ENCODE measurements at regions of chr2 and their contacts with region 1.

Region 1: GRCh38 chr2:1653956-1654695 is 90.2 kb downstream of the PXDN start:
- DNase-seq: peak in 1 of 2 donors; percentile 79
- H3K4me3 ChIP-seq: peak overlapping the region; percentile 1 to 15
- H3K27ac ChIP-seq: peak overlapping the region; percentile 94 to 97
- H3K4me1 ChIP-seq: peaks cover 22 to 56% of the 10 kb centered on the region in 2 donors
- H3K27me3 ChIP-seq: no peaks in the 10 kb centered on the region
- CTCF ChIP-seq: no peak

Region 2: GRCh38 chr2:1563943-1564891 is 89.9 kb before region 1 on chr2:
- intact Hi-C with region 1: no loop called
- DNase-seq: no peak
- H3K4me3 ChIP-seq: no peak overlapping the region
- H3K27ac ChIP-seq: no peak overlapping the region
- H3K4me1 ChIP-seq: no peaks in the 10 kb centered on the region
- H3K27me3 ChIP-seq: no peaks in the 10 kb centered on the region
- CTCF ChIP-seq: no peak

Region 3: DNA sequence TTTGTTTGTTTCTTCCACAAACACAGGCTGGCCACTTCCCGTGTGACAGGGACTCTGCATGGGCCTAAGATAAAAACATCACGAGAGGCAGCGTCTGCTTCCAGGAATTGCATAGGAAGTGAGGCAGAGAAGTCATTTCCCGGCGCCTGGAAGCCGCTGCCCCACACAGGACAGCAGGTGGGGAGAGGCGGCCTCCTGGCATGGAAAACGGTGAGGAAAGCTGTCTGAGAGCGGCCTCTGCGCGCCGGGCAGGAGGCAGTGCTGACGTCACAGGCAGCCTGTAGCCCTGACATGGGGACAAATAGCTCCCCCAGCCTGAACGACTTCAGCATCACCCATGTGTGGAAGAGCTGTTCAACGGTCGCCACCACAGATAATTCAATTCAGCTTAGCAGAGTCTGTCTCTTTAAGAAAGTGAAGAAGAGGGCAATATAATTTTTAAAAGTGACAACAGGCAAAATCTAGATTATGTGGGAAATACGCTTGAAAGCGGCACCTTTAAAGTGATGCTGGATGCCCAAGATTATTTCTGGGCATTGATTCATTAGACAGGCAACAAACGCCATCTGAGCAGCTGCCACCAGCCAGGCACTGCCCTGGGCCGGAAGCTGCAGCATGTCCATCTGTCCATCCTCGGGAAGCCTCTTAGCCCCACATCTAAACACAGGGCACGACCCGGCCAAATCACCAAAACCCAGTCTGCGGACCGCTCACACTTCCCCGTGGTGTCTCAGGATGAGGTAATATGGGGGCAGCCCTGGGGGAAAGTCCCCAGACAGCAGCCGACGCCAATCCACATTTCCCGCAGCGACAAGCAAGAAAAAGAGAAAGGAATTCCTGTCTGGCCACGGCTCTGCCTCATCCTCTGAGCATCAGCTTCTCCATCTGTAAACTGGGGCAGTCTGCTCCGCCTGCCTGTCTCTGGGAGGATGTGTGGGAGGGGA is 48.8 kb before region 1 on chr2:
- intact Hi-C with region 1: no loop called
- DNase-seq: no peak
- H3K4me3 ChIP-seq: no peak overlapping the region
- H3K27ac ChIP-seq: no peak overlapping the region
- H3K4me1 ChIP-seq: no peaks in the 10 kb centered on the region
- H3K27me3 ChIP-seq: no peaks in the 10 kb centered on the region
- CTCF ChIP-seq: no peak

Region 4: GRCh38 chr2:1641523-1641922 is 12.6 kb before region 1 on chr2:
- intact Hi-C with region 1: loop called (anchors 1 kb)
- DNase-seq: no peak
- H3K4me3 ChIP-seq: no peak overlapping the region
- H3K27ac ChIP-seq: peak overlapping the region; percentile 71
- H3K4me1 ChIP-seq: peaks cover 3 to 18% of the 10 kb centered on the region in 2 donors
- H3K27me3 ChIP-seq: no peaks in the 10 kb centered on the region
- CTCF ChIP-seq: no peak

Region 5: GRCh38 chr2:1721706-1722646 is 67.8 kb after region 1 on chr2:
- intact Hi-C with region 1: loop called (anchors 2 kb)
- DNase-seq: peak in 1 of 2 donors; percentile 70
- H3K4me3 ChIP-seq: no peak overlapping the region
- H3K27ac ChIP-seq: peak overlapping the region; percentile 84
- H3K4me1 ChIP-seq: peaks cover 9 to 25% of the 10 kb centered on the region in 2 donors
- H3K27me3 ChIP-seq: no peaks in the 10 kb centered on the region
- CTCF ChIP-seq: no peak

Region 6: DNA sequence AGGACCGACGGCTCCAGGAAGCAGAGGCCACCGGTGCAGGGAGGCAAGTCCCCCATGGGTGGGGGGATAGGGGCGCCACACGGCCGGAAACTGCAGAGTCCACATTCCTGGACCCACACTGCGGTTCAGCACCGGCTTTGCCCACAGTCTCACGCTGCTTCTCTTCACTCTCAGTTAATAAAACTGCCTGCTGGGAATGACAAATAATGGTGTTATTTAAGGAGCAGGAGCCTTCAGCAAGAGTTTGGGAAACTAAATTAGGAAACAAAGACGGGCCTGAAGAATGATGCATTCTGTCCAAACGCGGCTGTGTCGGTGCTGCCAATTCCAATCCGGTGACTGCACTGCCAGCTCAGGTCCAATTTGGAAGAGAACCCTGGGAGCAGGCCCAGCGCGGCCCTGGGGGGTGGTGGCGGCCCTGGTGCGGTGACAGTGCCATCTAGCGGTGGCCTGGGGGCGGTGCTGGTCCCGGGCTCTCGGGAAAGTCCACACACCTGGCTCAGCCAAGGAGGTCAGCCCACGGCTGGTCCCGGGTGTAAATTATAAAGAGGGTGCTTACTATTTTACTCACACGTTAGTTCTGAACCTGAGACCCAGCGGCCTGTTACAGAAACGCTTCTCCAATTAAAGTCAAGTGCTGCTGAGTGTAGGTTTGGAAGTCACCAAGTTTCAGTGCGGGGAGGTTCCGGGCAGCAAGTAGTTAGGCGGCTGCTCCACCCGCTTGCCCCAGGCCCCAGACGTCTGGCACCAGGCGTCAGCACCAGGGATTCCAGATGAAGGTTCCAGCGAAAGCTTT is 163.3 kb after region 1 on chr2:
- intact Hi-C with region 1: loop called (anchors 2 kb)
- DNase-seq: peak; percentile 80 to 98
- H3K4me3 ChIP-seq: peak overlapping the region in 1 of 2 donors; percentile 43
- H3K27ac ChIP-seq: peak overlapping the region; percentile 90 to 98
- H3K4me1 ChIP-seq: peaks cover 5 to 32% of the 10 kb centered on the region in 2 donors
- H3K27me3 ChIP-seq: no peaks in the 10 kb centered on the region
- CTCF ChIP-seq: peak; percentile 97 to 99 (median 99)

Region 7: GRCh38 chr2:3461801-3462492 is 1807.8 kb after region 1 on chr2:
- intact Hi-C with region 1: loop called (anchors 10 kb)
- DNase-seq: peak in 1 of 2 donors; percentile 63
- H3K4me3 ChIP-seq: peak overlapping the region in 1 of 2 donors; percentile 32
- H3K27ac ChIP-seq: peak overlapping the region; percentile 78 to 90
- H3K4me1 ChIP-seq: peaks cover 6 to 7% of the 10 kb centered on the region in 2 donors
- H3K27me3 ChIP-seq: no peaks in the 10 kb centered on the region
- CTCF ChIP-seq: peak; percentile 54 to 97 (median 81)